Activated CD8-positive, alpha-beta T cell treated with anti-CD3 and anti-CD28 coated beads, Interleukin-2, amount 10 ng/mL, durations not matched to agents 7 days and 5 days (primary cell): ENCODE measurements at regions of chr21 and their contacts with region 1.

Region 1: GRCh38 chr21:35400233-35400957 is 351.3 kb upstream of the RUNX1 start:
- DNase-seq: peak; percentile 58
- ATAC-seq: peak; percentile 81
- H3K4me3 Mint-ChIP-seq: no peak overlapping the region
- H3K27ac Mint-ChIP-seq: no peak overlapping the region
- H3K4me1 Mint-ChIP-seq: peaks cover 4% of the 10 kb centered on the region
- H3K27me3 Mint-ChIP-seq: peaks cover 9% of the 10 kb centered on the region

Region 2: GRCh38 chr21:34693192-34693810 is 707.1 kb before region 1 on chr21:
- CTCF ChIA-PET with region 1: interaction called, 11 read pairs
- POLR2A ChIA-PET with region 1: no interaction called
- DNase-seq: peak; percentile 65
- ATAC-seq: peak; percentile 30
- H3K4me3 Mint-ChIP-seq: no peak overlapping the region
- H3K27ac Mint-ChIP-seq: no peak overlapping the region
- H3K4me1 Mint-ChIP-seq: peaks cover 5% of the 10 kb centered on the region
- H3K27me3 Mint-ChIP-seq: peaks cover 18% of the 10 kb centered on the region

Region 3: DNA sequence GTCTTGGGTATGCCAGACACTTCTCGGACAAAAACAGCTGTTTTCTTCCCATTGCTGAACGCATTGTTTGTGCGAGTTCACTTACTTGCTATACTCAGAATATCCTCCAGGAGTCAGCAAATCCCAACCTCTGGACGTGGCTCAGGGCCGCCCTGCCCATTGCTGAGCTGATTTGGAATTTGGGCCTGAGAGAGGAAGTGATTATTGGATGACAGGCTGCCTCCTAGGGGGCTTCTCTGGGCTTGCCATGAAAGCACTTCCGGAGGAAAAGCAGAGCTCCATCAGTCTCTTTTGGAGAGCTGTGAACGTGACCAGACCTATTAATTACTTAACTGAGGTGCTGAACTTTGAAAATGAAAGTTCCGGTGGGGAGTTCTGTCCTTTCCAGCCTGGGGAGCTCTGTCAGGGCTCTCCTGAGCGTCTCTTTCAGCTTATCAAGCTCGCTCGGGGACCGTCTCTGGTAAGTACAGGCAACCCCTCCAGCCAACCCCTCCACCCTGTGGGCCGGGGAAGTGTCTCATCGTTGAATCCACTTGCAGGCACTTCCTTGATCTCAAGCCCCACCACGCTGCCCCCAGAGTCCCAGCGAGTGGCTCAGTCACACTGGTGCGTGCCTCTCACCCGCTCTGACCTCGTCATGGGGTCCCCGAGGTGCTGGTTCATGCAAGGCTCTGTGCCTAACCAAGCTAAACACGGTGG is 654.7 kb before region 1 on chr21:
- CTCF ChIA-PET with region 1: interaction called, 31 read pairs
- POLR2A ChIA-PET with region 1: no interaction called
- DNase-seq: peak; percentile 59
- ATAC-seq: peak; percentile 79
- H3K4me3 Mint-ChIP-seq: no peak overlapping the region
- H3K27ac Mint-ChIP-seq: no peak overlapping the region
- H3K4me1 Mint-ChIP-seq: peaks cover 9% of the 10 kb centered on the region
- H3K27me3 Mint-ChIP-seq: peaks cover 23% of the 10 kb centered on the region

Region 4: GRCh38 chr21:35051287-35051818 is 349.0 kb before region 1 on chr21:
- CTCF ChIA-PET with region 1: interaction called, 23 read pairs
- POLR2A ChIA-PET with region 1: no interaction called
- DNase-seq: peak; percentile 88
- ATAC-seq: peak; percentile 57
- H3K4me3 Mint-ChIP-seq: peak overlapping the region; percentile 30
- H3K27ac Mint-ChIP-seq: peak overlapping the region; percentile 66
- H3K4me1 Mint-ChIP-seq: peaks cover 54% of the 10 kb centered on the region
- H3K27me3 Mint-ChIP-seq: peaks cover 10% of the 10 kb centered on the region

Region 5: GRCh38 chr21:35840197-35840799 is 439.9 kb after region 1 on chr21:
- CTCF ChIA-PET with region 1: interaction called, 12 read pairs
- POLR2A ChIA-PET with region 1: no interaction called
- DNase-seq: peak; percentile 74
- ATAC-seq: no peak
- H3K4me3 Mint-ChIP-seq: no peak overlapping the region
- H3K27ac Mint-ChIP-seq: no peak overlapping the region
- H3K4me1 Mint-ChIP-seq: no peaks in the 10 kb centered on the region
- H3K27me3 Mint-ChIP-seq: no peaks in the 10 kb centered on the region